AG04450 (cell line): ENCODE measurements at regions of chr7 and their contacts with region 1.

Region 1: GRCh38 chr7:150988230-150989226 is 2.3 kb upstream of the NOS3 start:
- DNase-seq: no peak
- H3K4me3 ChIP-seq: no peak overlapping the region
- H3K27ac ChIP-seq: no peak overlapping the region
- H3K27me3 ChIP-seq: peaks cover 13% of the 10 kb centered on the region
- CTCF ChIP-seq: peak; percentile 84

Region 2: DNA sequence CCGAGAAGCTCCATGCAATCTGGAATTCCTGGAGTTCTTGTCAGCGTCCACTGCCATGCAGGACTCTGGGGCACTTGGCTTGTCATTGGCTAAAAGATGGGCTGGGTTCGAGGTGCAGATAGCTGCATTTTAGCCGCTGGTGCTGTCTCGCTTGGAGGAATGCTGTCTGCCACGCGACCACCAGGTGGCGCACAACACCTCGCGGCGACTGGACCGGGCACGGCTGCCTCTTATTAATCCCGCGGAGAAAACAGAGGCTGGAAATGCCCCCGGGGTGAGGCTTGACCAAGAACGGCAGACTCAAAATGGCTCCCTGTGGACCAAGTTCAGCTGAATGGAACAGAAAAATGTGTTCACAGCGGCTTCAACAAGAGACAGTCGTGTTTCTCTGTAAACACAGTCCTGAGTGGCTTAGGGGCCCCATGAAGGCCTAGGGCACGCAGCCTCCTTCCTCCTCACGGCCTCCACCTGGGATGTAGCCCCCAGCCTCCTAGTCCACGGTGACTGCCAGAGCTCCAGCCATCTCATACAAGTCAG is 90.0 kb before region 1 on chr7:
- CTCF ChIA-PET with region 1: interaction called, 46 read pairs
- POLR2A ChIA-PET with region 1: no interaction called
- DNase-seq: peak; percentile 29
- H3K4me3 ChIP-seq: no peak overlapping the region
- H3K27ac ChIP-seq: no peak overlapping the region
- H3K27me3 ChIP-seq: peaks cover 14% of the 10 kb centered on the region
- CTCF ChIP-seq: peak; percentile 90

Region 3: DNA sequence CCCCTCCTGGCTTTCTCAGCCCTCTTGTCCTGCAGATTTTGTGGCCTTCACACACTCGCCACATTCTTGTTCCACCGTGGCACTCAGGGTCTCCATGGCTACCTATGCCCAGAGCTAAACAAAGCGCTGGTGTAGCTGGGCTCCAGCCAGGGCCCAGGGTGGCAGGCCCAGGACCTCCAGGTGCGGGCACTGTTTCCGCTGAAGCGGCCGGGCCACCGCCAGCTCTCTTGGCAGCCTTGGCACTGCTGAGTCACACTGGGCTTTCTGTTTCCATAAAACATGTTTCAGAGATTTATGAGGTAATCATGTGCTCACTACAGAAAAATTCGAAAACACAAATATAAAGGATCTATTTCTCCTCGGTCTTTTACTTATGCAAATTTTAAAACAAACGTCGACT is 84.9 kb before region 1 on chr7:
- CTCF ChIA-PET with region 1: interaction called, 46 read pairs
- POLR2A ChIA-PET with region 1: no interaction called
- DNase-seq: peak; percentile 41
- H3K4me3 ChIP-seq: no peak overlapping the region
- H3K27ac ChIP-seq: peak overlapping the region; percentile 52
- H3K27me3 ChIP-seq: no peaks in the 10 kb centered on the region
- CTCF ChIP-seq: no peak

Region 4: GRCh38 chr7:150962553-150963399 is 25.8 kb before region 1 on chr7:
- CTCF ChIA-PET with region 1: interaction called, 78 read pairs
- POLR2A ChIA-PET with region 1: no interaction called
- DNase-seq: no peak
- H3K4me3 ChIP-seq: no peak overlapping the region
- H3K27ac ChIP-seq: no peak overlapping the region
- H3K27me3 ChIP-seq: peaks cover 27% of the 10 kb centered on the region
- CTCF ChIP-seq: peak; percentile 91

Region 5: DNA sequence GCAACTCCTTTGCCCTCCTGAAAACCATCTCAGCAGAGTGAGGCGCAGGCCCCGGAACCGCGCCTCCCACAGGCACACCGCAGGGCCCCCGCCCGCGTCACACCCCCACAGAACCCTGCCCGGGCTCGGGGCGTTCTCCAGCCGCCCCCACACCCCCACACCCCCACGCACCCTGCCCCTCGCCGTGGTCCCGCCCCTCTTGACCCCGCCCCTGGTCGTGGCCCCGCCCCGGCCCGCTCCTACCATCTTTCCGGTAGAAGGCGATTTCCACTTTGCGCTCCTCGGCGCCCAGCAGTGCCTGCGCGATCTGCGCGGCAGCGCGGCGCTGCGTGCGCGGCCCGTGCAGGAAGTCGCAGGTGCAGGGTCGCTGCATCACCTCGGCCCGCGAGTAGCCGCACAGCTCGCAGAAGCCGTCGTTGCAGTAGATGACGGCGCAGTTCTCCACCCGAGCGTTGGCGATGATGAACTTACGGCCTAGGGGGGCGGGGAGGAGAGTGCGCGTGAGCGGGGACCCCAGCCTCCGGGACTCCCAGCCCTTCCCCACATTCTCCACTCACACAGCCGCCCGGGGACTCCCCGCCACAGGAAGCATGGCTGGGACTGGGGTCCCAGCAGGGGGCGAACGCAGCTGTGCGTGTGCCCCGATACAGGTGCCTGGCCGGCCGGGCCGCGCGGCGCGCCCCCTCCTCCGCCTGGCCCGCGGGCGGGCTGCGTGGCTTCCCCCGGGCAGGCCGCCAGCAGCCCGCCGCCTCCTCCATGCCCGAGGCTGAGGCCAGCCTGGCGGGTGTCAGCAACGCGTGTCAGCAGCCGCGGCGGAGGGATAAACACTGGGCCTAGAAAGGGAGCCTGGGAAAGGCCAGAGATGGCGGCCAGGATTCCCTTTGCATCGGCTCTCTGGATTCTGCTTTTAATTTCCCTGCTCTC is 13.8 kb before region 1 on chr7:
- CTCF ChIA-PET with region 1: interaction called, 13 read pairs
- POLR2A ChIA-PET with region 1: no interaction called
- DNase-seq: no peak
- H3K4me3 ChIP-seq: peak overlapping the region; percentile 45
- H3K27ac ChIP-seq: no peak overlapping the region
- H3K27me3 ChIP-seq: peaks cover 81% of the 10 kb centered on the region
- CTCF ChIP-seq: peak; percentile 30; the same call in 1 of the 2 replicates

Region 6: DNA sequence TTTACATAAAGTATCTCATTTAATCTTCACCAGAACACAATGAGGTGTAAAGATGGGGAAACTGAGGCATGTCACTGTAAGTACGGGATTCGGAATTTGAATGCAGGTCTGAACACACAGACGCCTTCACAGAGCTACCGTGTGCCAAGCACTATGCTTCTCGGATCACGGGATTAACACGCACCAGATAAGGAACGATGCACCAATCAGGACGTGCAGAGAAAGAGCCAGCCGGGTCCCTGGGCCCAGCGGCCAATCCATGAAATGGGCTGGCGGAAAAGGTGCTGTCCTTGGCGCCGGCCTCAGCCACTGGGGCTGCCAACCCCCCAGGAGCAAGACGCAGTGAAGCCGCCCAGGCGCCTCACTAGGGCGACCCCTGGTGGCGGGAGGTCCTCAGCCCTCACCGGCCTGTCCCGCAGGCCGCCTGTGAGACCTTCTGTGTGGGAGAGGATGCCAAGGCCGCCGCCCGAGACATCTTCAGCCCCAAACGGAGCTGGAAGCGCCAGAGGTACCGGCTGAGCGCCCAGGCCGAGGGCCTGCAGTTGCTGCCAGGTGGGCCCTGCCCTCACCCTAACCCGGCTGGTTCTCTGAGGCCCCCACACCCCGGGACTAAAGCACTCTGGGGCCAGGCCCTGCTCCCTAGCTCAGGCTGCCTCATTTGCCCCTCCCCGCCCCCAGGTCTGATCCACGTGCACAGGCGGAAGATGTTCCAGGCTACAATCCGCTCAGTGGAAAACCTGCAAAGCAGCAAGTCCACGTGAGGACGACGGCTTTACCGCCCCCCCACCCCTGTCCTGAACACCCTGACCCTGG is 20.2 kb after region 1 on chr7:
- CTCF ChIA-PET with region 1: interaction called, 24 read pairs
- POLR2A ChIA-PET with region 1: no interaction called
- DNase-seq: no peak
- H3K4me3 ChIP-seq: peak overlapping the region; percentile 5; the same call in 1 of the 2 replicates
- H3K27ac ChIP-seq: no peak overlapping the region
- H3K27me3 ChIP-seq: peaks cover 8% of the 10 kb centered on the region
- CTCF ChIP-seq: peak; percentile 58